ENCODE measurements at regions of chr14 and their contacts with region 1.

Region 1: DNA sequence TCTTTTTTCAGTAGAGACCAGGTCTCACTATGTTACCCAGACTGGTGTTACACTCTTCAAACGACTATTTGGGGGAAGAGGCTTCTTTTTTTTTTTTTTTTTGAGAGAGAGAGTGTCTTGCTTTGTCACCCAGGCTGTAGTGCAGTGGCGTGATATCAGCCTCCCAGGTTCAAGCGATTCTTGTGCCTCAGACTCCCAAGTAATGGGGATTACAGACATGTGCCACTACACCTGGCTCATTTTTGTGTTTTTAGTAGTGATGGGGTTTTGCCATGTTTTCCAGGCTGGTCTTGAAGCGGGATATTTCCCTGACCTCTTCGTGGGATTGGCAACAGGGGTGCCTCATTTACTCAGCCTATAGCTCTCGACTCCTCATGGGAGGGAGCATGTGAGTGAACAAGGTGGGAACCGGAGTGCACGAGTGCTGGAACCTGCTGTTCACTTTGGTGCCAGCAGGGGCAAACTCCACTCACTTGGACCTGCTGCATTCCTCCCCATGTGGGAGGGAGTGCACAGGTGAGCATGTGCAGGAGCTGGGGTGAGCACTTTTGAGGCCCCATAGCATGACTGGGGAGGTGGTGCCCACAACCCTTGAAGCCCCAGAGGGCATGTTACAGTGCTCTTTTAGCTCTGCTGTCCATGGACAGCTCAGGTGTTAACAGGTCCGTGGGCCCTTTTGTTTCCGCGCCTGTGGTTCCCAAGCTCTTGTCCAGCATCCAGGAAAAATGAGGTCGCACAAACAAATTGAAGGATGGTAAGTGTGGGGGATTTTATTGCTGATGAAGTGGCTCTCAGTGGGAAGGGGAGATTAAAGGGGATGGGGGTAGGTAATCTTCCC is 79.1 kb upstream of the HECTD1 start:
- DNase-seq: peak; percentile 49
- ATAC-seq: peak; percentile 59
- H3K4me3 ChIP-seq: no peak overlapping the region
- H3K27ac ChIP-seq: no peak overlapping the region
- H3K4me1 ChIP-seq: no peaks in the 10 kb centered on the region
- H3K27me3 ChIP-seq: no peaks in the 10 kb centered on the region
- CTCF ChIP-seq: peak; percentile 53

Region 2: DNA sequence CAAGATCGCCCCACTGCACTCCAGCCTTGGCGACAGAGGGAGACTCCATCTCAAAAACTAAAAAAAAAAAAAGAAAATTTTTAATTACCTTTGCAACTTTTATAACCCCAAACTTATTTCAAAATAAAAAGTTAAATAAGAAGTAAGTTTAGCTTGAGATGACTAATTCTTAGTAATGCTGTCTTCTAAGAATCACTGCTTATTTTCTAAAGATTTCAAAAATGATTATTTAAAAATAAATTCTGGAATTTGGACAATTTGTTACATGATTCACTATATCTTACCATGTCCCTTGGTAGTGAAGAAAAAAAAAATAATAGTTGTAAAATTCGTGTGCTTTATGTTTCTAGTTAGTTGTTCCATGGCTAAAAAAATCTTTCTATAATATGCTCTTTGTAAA is 67.5 kb before region 1 on chr14:
- CTCF ChIA-PET with region 1: no interaction called
- POLR2A ChIA-PET with region 1: no interaction called
- intact Hi-C with region 1: no loop called
- DNase-seq: peak; percentile 35
- ATAC-seq: peak; percentile 67
- H3K4me3 ChIP-seq: no peak overlapping the region
- H3K27ac ChIP-seq: no peak overlapping the region
- H3K4me1 ChIP-seq: peaks cover 12% of the 10 kb centered on the region
- H3K27me3 ChIP-seq: no peaks in the 10 kb centered on the region
- CTCF ChIP-seq: no peak

Region 3: DNA sequence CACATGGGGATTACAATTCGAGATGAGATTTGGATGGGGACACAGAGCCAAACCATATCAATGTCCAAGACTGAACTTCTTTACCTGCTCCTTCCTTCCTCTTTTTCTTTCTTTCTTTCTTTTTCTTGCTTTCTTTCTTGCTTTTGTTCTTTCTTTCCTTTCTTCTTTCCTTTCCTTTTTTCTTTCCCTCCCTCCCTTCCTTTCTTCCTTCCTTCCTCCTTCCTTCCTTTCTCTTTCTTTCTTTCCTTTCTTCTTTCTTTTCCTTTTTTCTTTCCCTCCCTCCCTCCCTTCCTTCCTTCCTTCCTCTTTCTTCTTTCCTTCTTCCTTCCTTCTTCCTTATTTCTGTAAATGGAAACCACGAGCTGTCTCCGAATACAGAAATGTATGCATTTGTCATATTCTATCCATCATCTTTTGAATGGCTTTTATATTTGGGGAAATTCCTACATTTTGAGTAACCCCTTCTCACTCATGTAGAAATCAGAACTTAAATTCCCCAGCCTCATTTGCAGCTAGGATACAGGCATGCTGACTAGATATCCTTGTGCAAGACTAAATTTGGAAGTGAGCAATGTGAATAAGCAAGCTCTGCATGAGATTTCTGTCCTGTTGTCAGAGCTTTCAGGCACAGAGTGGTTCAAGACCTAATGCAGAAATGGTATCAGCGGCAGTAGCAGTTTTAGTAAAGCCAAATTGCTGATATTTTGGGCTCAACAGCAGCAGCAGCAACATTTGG is 189.6 kb after region 1 on chr14:
- CTCF ChIA-PET with region 1: no interaction called
- POLR2A ChIA-PET with region 1: interaction called, 14 read pairs
- intact Hi-C with region 1: no loop called
- DNase-seq: no peak
- ATAC-seq: no peak
- H3K4me3 ChIP-seq: no peak overlapping the region
- H3K27ac ChIP-seq: no peak overlapping the region
- H3K4me1 ChIP-seq: no peaks in the 10 kb centered on the region
- H3K27me3 ChIP-seq: 0 out of 2 replicates have a peak, but pooled peaks cover 4% of the 10 kb centered on the region
- CTCF ChIP-seq: no peak

Region 4: GRCh38 chr14:32286602-32287001 is 999.9 kb after region 1 on chr14:
- CTCF ChIA-PET with region 1: no interaction called
- POLR2A ChIA-PET with region 1: no interaction called
- intact Hi-C with region 1: no loop called
- DNase-seq: no peak
- ATAC-seq: no peak
- H3K4me3 ChIP-seq: no peak overlapping the region
- H3K27ac ChIP-seq: no peak overlapping the region
- H3K4me1 ChIP-seq: no peaks in the 10 kb centered on the region
- H3K27me3 ChIP-seq: no peaks in the 10 kb centered on the region
- CTCF ChIP-seq: no peak